Right ventricle myocardium inferior (tissue), 1 donor: ENCODE measurements at regions of chr20 and their contacts with region 1.

Region 1: GRCh38 chr20:45011108-45011526 is 44.8 kb downstream of the STK4 start:
- DNase-seq: no peak
- ATAC-seq: peak; percentile 82

Region 2: GRCh38 chr20:45095753-45096371 is 84.7 kb after region 1 on chr20:
- intact Hi-C with region 1: loop called (anchors 1 kb)
- DNase-seq: no peak
- ATAC-seq: peak; percentile 15

Region 3: DNA sequence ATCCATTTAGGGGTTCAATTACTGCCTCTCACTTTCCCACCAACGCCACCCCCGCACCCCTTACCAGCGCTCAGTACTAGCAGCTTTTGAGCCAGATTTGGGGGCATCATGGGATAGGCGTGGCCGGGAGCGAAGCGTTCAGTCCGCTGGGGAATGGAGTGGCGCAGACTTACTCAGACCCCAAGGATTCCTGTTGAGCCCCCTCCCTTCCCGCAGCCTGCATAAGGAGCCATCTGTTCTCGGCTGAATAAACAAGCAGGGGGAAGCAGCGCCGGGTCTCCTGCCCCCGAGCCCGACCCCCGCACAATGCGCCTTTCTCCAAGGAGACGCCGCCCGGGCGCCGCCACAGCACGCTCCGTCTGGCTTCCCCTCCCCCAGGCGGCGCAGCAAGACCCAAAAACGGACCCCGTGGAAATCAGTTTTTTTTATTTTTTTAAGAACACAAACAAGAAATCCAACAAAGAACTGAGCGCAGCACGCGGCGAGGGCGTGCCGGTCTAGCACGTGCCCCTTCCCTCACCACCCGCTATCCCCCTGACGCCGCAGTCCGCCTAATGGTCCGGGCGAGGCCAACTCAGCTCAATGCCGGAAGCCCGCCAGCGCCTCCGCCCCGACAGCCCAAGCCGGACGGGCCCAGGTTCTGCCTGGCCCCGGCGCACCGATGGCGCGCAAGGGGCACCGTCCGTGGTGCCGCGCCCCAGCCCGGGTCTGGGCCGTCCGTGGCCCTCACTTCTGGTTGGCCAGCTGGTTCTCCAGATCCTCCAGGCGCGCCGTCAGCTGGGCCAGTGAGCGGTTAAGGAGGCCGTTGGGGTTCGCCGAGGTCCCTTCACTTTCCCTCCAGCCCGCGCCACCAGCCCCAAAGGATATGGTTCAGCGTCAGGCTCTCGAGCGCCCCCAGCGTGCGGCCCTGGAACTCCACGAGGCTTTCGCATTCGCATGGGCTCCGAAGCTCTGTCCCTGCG is 282.2 kb after region 1 on chr20:
- intact Hi-C with region 1: loop called (anchors 2 kb)
- DNase-seq: peak; percentile 92
- ATAC-seq: peak; percentile 88